Heart left ventricle (tissue), 16 donors: ENCODE measurements at regions of chr16 and their contacts with region 1.

Region 1: DNA sequence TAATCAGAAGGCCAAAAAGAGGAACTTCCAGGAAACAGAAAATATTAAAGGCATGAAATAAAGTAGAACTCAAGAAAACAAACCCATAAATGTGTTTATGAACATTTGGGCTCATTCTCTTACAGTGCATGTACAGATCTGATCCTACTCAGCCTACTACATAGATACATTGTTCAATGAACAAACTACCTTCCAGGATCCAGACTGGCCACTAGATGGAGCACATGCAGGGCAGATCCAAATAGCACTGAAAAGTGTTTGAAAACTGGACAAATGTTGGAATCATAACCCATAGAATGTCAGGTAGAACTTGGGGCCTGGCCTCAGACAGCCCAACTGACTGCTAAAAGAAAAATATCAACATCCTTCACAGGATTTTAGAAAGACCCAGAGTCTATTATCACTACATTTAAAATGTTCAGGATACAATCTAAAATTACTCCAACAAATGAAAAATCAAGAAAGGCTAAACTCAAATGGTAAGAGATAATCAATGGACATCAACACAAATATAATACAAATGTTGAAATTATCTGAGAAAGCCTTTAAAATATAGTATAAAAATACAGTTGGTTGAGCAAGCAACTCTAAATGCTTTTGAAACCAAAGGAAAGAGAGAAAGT is 122.4 kb upstream of the NUDT7 start:
- DNase-seq: no peak
- ATAC-seq: no peak
- H3K4me3 ChIP-seq: no peak overlapping the region
- H3K27ac ChIP-seq: no peak overlapping the region
- H3K4me1 ChIP-seq: peaks cover 0 to 13% (median 0%) of the 10 kb centered on the region in 12 donors
- H3K27me3 ChIP-seq: no peaks in the 10 kb centered on the region
- CTCF ChIP-seq: peak; percentile 44 to 74 (median 58)
- POLR2A ChIP-seq: no peak

Region 2: DNA sequence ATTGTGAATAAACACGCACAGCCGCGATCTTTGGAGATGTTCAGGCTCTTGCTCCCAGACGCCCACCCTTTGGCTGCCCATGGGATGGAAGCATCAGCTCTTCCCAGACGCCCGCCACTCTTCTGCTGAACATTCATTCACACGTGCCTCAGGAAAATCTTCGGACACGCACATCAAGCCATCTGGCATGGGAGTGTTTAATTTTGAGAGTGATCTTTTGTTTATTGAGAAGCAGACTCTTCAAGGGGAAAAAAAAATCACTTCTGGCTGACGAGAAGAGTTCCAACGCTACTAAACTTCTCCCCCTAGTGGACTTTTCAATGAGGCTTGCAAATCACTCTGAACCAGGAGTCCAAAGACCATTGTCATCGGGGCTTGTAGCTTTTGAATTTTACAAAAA is 60.4 kb after region 1 on chr16:
- intact Hi-C with region 1: loop called in 6 of 10 experiments (anchors 2 to 5 kb)
- DNase-seq: no peak
- ATAC-seq: peak in 1 of 4 donors; percentile 30
- H3K4me3 ChIP-seq: no peak overlapping the region
- H3K27ac ChIP-seq: no peak overlapping the region
- H3K4me1 ChIP-seq: peaks cover 0 to 2% (median 0%) of the 10 kb centered on the region in 12 donors
- H3K27me3 ChIP-seq: peaks cover 0 to 9% (median 0%) of the 10 kb centered on the region in 9 donors
- CTCF ChIP-seq: peak; percentile 24 to 63 (median 46)
- POLR2A ChIP-seq: no peak

Region 3: DNA sequence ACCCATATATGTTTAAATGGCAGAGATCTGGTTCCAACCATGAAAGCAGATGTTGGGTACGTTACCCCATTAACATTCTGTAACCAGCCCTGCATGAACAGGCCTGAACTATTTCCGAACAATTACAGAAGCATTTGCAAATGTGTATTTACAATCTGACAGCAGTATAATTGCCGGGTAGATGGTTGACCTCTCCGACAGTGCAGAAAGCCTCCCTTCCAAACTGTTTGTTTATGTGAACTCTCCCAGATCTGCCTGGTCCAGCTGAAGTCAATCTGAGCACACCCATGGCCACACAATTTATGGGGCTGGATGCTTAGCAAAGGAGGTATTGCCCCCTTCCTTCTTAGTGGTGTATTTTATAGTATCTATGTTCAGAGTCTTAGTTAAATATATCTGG is 144.2 kb after region 1 on chr16:
- intact Hi-C with region 1: no loop called
- DNase-seq: no peak
- ATAC-seq: no peak
- H3K4me3 ChIP-seq: no peak overlapping the region
- H3K27ac ChIP-seq: no peak overlapping the region
- H3K4me1 ChIP-seq: no peaks in the 10 kb centered on the region
- H3K27me3 ChIP-seq: no peaks in the 10 kb centered on the region
- CTCF ChIP-seq: no peak
- POLR2A ChIP-seq: no peak